Mammary epithelial cell (primary cell): ENCODE measurements at regions of chr7 and their contacts with region 1.

Region 1: GRCh38 chr7:77940647-77941046 is 142.1 kb downstream of the PHTF2 start:
- DNase-seq: peak; percentile 7
- H3K4me3 ChIP-seq: no peak overlapping the region
- H3K27ac ChIP-seq: no peak overlapping the region
- H3K4me1 ChIP-seq: peaks cover 3% of the 10 kb centered on the region
- H3K27me3 ChIP-seq: no peaks in the 10 kb centered on the region
- CTCF ChIP-seq: peak; percentile 41 to 67

Region 2: GRCh38 chr7:77759294-77759889 is 181.3 kb before region 1 on chr7:
- CTCF ChIA-PET with region 1: no interaction called
- dilution Hi-C with region 1: no loop called
- in situ Hi-C with region 1: no loop called
- intact Hi-C with region 1: loop called (anchors 1 kb)
- DNase-seq: peak; percentile 39
- H3K4me3 ChIP-seq: no peak overlapping the region
- H3K27ac ChIP-seq: no peak overlapping the region
- H3K4me1 ChIP-seq: no peaks in the 10 kb centered on the region
- H3K27me3 ChIP-seq: no peaks in the 10 kb centered on the region
- CTCF ChIP-seq: peak; percentile 70 to 76

Region 3: GRCh38 chr7:78020136-78020873 is 79.7 kb after region 1 on chr7:
- CTCF ChIA-PET with region 1: no interaction called
- dilution Hi-C with region 1: no loop called
- in situ Hi-C with region 1: no loop called
- intact Hi-C with region 1: loop called (anchors 5 kb)
- DNase-seq: peak; percentile 60
- H3K4me3 ChIP-seq: peak overlapping the region in 1 of 3 experiments; percentile 53
- H3K27ac ChIP-seq: no peak overlapping the region
- H3K4me1 ChIP-seq: peaks cover 7% of the 10 kb centered on the region
- H3K27me3 ChIP-seq: peaks cover under 1% of the 10 kb centered on the region
- CTCF ChIP-seq: peak; percentile 65 to 77

Region 4: DNA sequence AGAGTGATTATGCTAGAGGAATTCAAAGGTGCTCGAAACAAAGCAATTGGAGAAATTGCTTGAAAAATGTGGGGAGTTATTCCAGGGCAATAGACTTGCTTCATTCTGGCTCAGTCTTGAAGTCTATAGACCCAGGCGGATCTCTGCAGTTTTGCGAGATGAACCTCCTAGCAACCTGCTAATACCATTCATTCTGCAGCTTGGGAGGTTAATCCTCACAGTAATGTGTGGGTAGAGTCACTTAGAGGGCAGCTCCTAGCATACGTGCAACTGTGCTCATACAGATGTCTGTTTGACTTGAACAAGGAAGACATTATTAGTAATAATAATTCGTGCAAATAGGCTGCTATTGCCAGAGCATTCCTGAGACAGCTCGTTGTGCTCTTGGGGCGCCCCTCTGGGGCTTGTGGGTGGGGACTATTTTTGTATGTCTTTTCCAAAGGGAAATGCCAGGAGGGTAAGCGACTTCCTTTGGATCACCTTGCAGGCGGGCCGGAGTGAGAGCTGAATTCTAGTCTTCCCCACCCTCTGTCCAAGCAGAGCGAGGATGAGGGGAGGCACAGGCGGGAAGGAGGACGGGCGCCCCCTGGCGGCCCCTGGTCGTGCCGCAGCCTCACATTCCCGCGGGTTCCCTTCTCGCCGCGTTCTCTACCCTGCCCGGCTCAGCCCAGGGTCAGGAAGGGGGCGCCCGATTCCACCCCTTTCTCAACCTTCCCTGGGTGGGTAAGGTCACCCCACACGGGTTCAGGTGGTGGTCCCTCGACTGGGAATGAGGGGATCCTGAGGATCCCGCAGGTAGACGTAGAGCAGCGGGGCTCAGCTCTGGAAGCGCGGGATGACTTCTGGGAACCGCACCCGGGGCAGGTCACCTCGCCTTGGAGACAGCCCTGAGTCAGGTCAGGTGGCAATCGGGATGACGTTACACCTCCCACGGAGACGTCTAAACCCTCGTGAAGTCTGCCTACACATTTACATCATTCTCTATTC is 99.4 kb after region 1 on chr7:
- CTCF ChIA-PET with region 1: no interaction called
- dilution Hi-C with region 1: no loop called
- in situ Hi-C with region 1: no loop called
- intact Hi-C with region 1: loop called (anchors 1 kb)
- DNase-seq: no peak
- H3K4me3 ChIP-seq: no peak overlapping the region
- H3K27ac ChIP-seq: no peak overlapping the region
- H3K4me1 ChIP-seq: no peaks in the 10 kb centered on the region
- H3K27me3 ChIP-seq: no peaks in the 10 kb centered on the region
- CTCF ChIP-seq: peak; percentile 35 to 58

Region 5: GRCh38 chr7:78924581-78924980 is 983.9 kb after region 1 on chr7:
- CTCF ChIA-PET with region 1: no interaction called
- dilution Hi-C with region 1: no loop called
- in situ Hi-C with region 1: no loop called
- intact Hi-C with region 1: loop called (anchors 2 kb)
- DNase-seq: peak; percentile 4
- H3K4me3 ChIP-seq: no peak overlapping the region
- H3K27ac ChIP-seq: no peak overlapping the region
- H3K4me1 ChIP-seq: no peaks in the 10 kb centered on the region
- H3K27me3 ChIP-seq: no peaks in the 10 kb centered on the region
- CTCF ChIP-seq: peak; percentile 24 to 39